ENCODE measurements at regions of chr7 and their contacts with region 1.

Region 1: DNA sequence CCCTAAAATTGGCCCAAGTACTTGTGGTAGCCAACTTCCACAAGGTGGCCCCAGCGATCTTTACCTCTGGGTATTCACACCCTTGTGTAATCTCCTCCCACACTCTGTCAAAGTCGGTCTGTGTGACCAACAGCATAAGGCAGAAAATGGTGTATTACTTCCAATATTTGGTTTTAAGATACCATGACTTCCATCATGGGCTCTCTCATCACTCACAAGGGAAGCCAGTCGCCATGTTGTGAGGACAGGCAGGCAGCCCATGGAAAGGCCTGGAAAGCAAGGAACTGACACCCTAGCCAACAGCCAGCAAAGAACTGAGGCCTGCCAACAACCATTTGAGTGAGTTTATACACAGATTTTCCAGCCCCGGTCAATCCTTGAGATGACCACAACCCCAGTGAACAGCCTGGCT is 91.0 kb upstream of the KMT2E start:
- DNase-seq: peak; percentile 68
- CTCF ChIP-seq: peak; percentile 76

Region 2: DNA sequence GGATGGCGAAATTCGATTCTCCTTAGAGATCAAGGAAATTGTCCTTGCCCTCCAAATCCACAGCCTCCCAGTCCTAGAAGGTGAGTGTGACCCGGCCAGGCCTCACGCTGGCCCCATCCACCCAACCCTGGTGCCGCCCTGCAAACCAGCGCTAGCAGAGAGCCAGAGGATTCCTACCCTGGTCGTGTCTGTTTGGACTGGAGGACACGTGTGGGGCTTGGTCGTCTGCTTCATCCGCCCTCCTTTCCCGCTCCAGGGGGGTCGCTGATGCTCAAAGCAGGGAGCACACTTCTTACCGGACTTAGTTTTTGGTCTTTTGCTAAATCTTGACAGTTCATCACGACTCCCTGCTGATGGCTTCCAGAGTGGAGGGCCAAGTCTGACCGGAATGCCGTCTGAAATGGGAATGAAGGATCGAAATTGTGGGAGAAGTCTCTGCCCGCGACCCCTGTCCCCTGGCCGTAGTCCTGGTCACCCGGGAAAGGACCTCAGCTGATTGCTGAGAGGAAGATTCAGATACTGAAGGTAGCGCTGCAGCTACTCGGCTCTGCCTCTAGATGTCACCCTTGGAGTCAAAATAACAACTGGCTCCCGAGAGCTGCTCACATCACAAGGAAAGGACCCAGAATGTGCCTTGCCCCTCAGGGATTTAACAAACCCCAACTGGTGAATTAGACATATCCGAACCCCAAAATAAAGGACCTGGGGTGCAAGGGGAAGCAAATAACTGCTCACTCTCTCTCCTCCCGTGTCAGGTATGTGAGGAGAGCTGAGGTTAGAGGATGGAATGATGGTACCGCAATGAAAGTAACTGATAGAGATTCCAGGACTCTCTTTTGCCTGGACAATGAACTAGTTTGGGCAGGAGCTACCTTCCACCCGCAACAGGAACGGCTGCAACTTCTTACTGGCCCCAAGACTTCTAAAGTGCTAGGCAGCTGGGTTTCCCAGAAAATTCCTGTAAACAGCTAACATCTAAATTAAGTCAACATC is 691.7 kb before region 1 on chr7:
- CTCF ChIA-PET with region 1: interaction called, 42 read pairs
- POLR2A ChIA-PET with region 1: no interaction called
- DNase-seq: peak; percentile 80
- CTCF ChIP-seq: peak; percentile 94

Region 3: DNA sequence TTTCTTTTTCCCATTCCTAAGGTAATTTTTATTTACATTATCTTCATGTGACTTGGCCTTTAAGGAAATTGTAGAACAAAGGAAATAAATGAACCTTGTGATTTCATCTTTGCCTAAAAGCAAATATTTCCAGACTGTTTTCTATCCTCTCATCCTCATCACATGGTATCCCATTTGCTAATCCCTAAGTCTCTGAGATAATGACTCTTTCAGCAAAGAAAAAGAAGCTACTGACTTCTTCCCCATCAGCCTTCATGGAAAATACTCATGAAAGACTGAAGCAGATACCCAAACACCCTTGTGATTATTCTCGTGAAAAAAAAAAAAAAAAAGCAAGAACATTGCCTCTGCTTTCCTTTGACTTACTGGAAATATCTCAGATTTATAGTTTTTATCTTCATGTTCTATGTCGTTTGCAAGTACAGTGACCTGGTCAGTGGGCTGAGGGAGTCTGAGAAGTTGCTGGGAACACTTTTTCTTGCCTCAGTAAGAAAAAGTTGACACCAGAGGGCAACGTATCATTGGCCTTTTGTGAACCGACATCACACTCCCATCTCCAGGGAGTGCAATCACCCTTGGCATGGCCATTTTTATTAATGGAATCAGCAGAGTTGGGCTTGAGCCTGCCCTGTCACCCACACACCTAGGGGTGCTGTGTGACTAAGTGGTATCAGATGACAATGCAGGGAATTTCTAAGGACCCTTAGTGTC is 155.0 kb before region 1 on chr7:
- CTCF ChIA-PET with region 1: no interaction called
- POLR2A ChIA-PET with region 1: no interaction called
- DNase-seq: no peak
- CTCF ChIP-seq: no peak

Region 4: DNA sequence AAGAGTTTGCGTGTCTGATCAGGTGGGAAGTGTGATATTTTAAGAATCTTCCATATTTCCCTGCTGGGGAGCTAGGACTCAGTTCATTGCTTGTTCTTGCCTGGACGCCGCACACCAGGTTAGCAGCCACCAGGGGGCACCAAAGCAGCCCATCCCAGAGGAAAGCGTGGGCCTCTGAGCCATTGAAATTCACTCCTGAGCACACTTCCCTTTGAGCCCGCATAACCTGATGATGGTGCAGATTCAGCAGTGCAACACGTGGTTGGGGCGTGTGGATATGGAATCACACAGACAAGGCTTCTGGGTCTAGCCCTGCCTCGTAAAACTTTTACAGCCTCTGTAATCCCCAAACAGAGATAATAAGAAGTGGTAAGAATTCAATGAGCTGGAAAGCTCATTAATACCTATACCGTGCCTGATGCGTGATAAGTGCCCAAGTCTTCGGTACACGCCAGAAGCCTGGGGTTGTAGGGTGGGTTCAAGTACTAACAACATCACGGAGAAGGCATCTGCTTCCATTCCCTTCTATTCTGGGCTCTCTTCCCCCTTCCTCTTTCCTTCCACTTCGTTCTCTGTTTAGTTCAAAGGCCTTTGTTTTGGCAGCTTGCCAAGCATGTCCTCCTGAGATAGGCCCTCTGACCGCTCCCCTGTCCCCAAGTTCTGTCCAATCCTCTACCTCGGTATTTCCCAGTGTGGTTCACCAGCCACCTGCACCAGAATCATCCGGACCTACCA is 39.1 kb before region 1 on chr7:
- CTCF ChIA-PET with region 1: interaction called, 216 read pairs
- POLR2A ChIA-PET with region 1: interaction called, 4 read pairs
- DNase-seq: peak; percentile 79
- CTCF ChIP-seq: peak; percentile 87

Region 5: GRCh38 chr7:104908636-104909035 is 14.4 kb before region 1 on chr7:
- CTCF ChIA-PET with region 1: interaction called, 17 read pairs
- POLR2A ChIA-PET with region 1: no interaction called
- DNase-seq: no peak
- CTCF ChIP-seq: no peak

Region 6: DNA sequence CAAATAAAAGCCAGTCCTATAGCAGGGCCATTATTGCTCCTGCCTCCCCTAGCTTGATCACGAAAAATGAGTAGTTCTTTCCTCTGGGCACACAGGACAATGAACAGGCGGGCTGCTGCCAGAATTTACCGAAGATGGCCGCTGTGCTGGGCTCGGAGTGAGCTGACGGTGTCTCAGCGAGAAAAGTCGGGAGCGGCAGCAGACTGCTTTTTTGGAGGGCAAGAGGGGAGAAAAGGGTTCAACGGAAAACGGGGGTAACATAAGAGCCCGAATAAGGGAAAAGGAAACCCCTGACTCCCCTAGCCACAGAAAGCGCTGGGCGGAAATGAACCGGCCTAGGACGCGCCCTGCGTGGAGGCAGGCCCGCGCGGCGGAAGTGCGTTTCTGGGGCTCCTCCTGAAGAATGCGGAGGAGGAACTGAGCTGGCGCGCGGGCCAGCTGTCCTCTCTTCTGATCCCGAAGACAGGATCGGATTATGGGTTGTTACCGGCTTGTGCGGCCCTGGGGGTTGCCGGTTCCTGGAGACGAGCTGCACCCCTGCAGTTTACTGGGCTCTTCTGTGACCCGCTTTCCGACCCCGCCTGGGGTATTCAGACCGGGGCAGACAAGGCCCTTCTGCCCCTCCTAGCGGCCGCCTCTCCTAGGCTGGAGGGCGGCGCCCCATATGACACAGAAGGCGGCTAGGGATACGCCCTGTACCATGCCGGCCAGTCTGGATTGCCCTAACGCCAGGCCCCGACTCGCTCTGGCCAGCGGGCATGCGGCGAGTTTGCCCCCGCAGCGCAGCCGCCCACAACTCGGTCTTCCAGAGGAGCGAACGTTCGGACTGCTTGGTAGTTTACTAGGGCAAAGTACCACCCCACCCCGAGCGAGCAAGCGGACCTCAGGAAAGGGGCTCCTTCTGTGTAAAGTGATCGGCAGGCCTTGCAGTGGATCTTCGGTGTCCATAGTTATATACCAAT is 60.8 kb after region 1 on chr7:
- CTCF ChIA-PET with region 1: interaction called, 44 read pairs
- POLR2A ChIA-PET with region 1: no interaction called
- DNase-seq: peak; percentile 85
- CTCF ChIP-seq: peak; percentile 56

Measured in GM10248 (cell line).